ENCODE measurements at regions of chrX and their contacts with region 1.

Region 1: GRCh38 chrX:50100188-50100587 is 100.6 kb downstream of the AKAP4 start:
- DNase-seq: peak; percentile 4
- H3K4me3 Mint-ChIP-seq: no peak overlapping the region
- H3K27ac Mint-ChIP-seq: no peak overlapping the region
- H3K4me1 Mint-ChIP-seq: no peaks in the 10 kb centered on the region
- H3K27me3 Mint-ChIP-seq: no peaks in the 10 kb centered on the region

Region 2: GRCh38 chrX:50204364-50204899 is 104.2 kb after region 1 on chrX and contains the start of gene CCNB3:
- CTCF ChIA-PET with region 1: no interaction called
- intact Hi-C with region 1: loop called (anchors 1 kb)
- DNase-seq: peak; percentile 74
- H3K4me3 Mint-ChIP-seq: peak within 1 kb of the TSS; percentile 71
- H3K27ac Mint-ChIP-seq: peak within 1 kb of the TSS; percentile 79
- H3K4me1 Mint-ChIP-seq: peaks cover 11% of the 10 kb centered on the region
- H3K27me3 Mint-ChIP-seq: no peaks in the 10 kb centered on the region
- total RNA-seq, gene CCNB3: 0.37 to 0.79 TPM

Region 3: DNA sequence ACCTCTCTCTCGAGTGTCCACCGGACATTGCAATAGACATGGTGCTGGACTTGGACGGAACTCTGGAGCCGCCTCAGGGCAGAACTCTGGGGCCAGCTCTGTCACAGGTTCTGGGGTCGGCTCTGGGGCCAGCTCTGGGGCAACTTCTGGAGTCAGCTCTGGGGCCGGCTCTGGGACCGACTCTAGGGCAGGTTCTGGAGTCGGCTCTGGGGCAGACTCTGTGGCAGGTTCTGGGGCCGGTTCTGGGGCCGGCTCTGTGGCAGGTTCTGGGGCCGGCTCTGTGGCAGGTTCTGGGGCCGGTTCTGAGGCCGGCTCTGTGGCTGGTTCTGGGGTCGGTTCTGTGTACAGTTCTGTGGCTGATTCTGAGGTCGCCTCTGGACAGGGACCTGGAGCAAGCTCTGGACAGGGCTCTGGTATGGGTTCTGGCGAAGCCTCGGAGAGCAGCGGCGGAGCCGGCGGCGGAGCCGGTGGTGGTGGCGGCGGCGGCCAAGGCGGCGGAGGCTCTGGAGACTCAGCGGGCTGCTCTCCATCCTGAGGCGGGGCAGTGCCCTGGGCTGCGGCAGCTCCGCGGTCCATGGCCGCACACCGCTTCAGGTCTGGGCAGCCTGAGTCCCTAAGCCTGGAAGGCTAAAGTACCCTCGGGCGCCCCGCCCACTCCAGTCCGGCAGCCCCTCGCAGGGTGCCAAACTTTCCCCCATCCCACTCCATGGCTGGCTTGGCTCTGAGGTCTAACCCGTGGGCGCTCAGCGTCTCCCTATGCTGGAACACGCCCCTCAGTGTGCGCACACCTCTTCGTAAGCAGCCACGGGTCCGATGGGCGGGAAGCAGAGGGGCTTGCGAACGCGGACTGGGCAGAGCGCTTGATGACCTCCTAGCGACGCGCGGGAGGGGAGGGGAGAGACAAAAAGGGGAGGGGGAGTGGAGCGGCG is 370.2 kb after region 1 on chrX and contains the start of gene DGKK:
- CTCF ChIA-PET with region 1: no interaction called
- intact Hi-C with region 1: no loop called
- DNase-seq: no peak
- H3K4me3 Mint-ChIP-seq: peak within 1 kb of the TSS; percentile 41
- H3K27ac Mint-ChIP-seq: no peak within 1 kb of the TSS
- H3K4me1 Mint-ChIP-seq: peaks cover 9% of the 10 kb centered on the region
- H3K27me3 Mint-ChIP-seq: peaks cover 40% of the 10 kb centered on the region
- total RNA-seq, gene DGKK: not detected

Region 4: GRCh38 chrX:50579955-50580354 is 479.8 kb after region 1 on chrX:
- CTCF ChIA-PET with region 1: interaction called, 4 read pairs
- intact Hi-C with region 1: loop called (anchors 1 kb)
- DNase-seq: peak; percentile 46
- H3K4me3 Mint-ChIP-seq: no peak overlapping the region
- H3K27ac Mint-ChIP-seq: no peak overlapping the region
- H3K4me1 Mint-ChIP-seq: no peaks in the 10 kb centered on the region
- H3K27me3 Mint-ChIP-seq: peaks cover 2% of the 10 kb centered on the region